Activated CD8-positive, alpha-beta T cell treated with anti-CD3 and anti-CD28 coated beads, Interleukin-2, amount 10 ng/mL, durations not matched to agents 7 days and 5 days (primary cell): ENCODE measurements at regions of chr17 and their contacts with region 1.

Region 1: GRCh38 chr17:57046749-57047148 is 38.3 kb upstream of the AKAP1 start:
- DNase-seq: no peak
- ATAC-seq: no peak
- H3K4me3 Mint-ChIP-seq: peak overlapping the region; percentile 64
- H3K27ac Mint-ChIP-seq: no peak overlapping the region
- H3K4me1 Mint-ChIP-seq: peaks cover 27% of the 10 kb centered on the region
- H3K27me3 Mint-ChIP-seq: peaks cover 57% of the 10 kb centered on the region

Region 2: DNA sequence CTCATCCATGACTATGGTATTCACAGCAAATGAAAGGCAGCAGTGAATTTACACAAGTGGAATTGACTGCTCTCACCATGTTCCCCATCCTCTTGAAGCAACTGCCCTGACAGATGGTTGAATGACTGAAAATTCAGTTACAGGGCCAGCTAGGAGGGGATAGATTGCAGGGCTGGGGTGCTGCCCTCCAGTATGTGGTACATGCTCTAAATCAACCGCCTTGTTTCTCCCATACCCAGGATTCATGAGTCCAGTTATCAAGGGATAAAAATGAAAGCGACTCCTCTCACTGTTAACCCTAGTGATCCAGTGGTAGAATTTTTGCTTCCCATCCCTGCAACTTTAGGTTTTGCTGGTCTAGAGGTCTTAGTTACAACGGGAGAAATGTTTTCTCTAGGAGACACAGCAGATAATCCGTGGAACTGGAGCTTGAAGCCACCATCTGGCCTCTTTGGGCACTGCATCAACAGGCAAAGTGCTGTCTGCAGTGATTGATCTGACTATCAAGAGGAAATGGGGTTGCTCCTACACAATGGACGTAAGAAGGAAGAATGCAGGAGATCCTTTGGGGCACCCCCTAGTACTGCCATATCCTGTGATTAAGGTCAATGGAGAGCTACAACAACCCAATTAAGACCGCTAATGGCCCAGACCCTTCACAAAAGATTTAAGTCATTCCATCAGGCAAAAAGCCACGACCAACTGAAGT is 36.9 kb before region 1 on chr17:
- CTCF ChIA-PET with region 1: interaction called, 10 read pairs
- POLR2A ChIA-PET with region 1: no interaction called
- DNase-seq: peak; percentile 69
- ATAC-seq: peak; percentile 91
- H3K4me3 Mint-ChIP-seq: no peak overlapping the region
- H3K27ac Mint-ChIP-seq: no peak overlapping the region
- H3K4me1 Mint-ChIP-seq: peaks cover 22% of the 10 kb centered on the region
- H3K27me3 Mint-ChIP-seq: peaks cover 21% of the 10 kb centered on the region

Region 3: GRCh38 chr17:57033295-57033694 is 13.5 kb before region 1 on chr17:
- CTCF ChIA-PET with region 1: no interaction called
- POLR2A ChIA-PET with region 1: no interaction called
- DNase-seq: no peak
- ATAC-seq: no peak
- H3K4me3 Mint-ChIP-seq: no peak overlapping the region
- H3K27ac Mint-ChIP-seq: no peak overlapping the region
- H3K4me1 Mint-ChIP-seq: no peaks in the 10 kb centered on the region
- H3K27me3 Mint-ChIP-seq: peaks cover 24% of the 10 kb centered on the region